Kidney (tissue), 22 donors: ENCODE measurements at regions of chr17 and their contacts with region 1.

Region 1: DNA sequence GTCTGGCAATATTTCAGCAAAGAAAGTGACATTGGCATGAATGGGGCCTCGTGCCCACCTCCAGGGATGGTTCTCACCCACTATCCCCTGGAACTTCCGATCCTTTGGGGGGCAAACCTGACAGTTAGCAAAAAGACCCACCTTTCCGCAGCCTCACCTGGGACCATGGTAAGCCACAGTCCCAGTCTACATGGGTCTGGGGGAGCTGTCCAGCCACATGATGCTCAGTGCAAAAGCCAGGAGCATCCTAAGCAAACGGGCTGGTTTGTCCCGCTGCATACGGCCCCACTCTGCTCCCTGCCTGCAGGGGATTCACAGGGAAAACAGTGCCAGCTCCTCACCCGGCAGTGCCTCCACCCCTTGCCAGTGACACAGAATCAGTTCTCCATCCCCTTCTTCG is 19.3 kb downstream of the AIPL1 start:
- DNase-seq: no peak
- H3K4me3 ChIP-seq: no peak overlapping the region
- H3K27ac ChIP-seq: no peak overlapping the region
- H3K4me1 ChIP-seq: no peaks in the 10 kb centered on the region
- H3K27me3 ChIP-seq: no peaks in the 10 kb centered on the region
- CTCF ChIP-seq: no peak

Region 2: GRCh38 chr17:5598457-5598856 is 817.2 kb before region 1 on chr17:
- intact Hi-C with region 1: loop called (anchors 5 kb)
- DNase-seq: no peak
- H3K4me3 ChIP-seq: no peak overlapping the region
- H3K27ac ChIP-seq: no peak overlapping the region
- H3K4me1 ChIP-seq: no peaks in the 10 kb centered on the region
- H3K27me3 ChIP-seq: peaks cover 2% of the 10 kb centered on the region
- CTCF ChIP-seq: no peak

Region 3: DNA sequence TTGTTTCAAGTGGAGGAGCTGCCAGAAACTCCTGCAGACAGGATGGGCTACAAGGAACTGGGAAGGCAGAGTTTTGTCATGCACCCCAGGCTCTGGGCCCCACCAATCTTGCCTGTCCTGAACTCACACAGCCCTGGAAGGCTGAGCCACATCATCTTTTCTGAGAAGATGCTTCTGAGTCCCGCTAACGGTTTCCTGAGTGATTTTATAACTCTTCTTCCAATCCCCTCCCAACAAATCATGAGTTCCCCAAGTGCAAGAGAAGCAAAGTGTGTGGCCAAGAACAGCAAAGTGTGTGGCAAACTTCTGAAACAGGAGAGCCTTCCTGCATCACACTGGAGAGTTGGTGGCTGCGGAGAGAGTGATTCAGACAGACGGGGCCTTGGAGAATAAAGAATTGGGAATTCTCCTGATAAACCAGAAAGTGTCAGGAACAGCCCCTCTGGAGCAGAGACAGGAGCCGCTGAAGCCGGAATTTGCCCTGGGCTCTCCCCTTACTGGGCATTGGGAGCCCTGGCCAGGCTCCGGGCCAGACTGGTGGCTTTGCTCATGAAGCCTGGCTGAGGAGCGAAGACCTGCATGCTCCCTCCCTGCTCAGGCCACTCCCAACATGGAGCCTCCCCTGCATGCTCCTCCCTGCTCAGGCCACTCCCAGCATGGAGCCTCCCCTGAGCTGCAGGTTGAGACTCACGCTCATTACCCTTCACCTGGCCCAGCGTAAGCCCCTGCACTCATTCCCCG is 93.6 kb after region 1 on chr17:
- intact Hi-C with region 1: no loop called
- DNase-seq: no peak
- H3K4me3 ChIP-seq: no peak overlapping the region
- H3K27ac ChIP-seq: no peak overlapping the region
- H3K4me1 ChIP-seq: peaks cover 0 to 6% (median 0%) of the 10 kb centered on the region in 3 donors
- H3K27me3 ChIP-seq: no peaks in the 10 kb centered on the region
- CTCF ChIP-seq: no peak